ENCODE measurements at regions of chr14 and their contacts with region 1.

Region 1: DNA sequence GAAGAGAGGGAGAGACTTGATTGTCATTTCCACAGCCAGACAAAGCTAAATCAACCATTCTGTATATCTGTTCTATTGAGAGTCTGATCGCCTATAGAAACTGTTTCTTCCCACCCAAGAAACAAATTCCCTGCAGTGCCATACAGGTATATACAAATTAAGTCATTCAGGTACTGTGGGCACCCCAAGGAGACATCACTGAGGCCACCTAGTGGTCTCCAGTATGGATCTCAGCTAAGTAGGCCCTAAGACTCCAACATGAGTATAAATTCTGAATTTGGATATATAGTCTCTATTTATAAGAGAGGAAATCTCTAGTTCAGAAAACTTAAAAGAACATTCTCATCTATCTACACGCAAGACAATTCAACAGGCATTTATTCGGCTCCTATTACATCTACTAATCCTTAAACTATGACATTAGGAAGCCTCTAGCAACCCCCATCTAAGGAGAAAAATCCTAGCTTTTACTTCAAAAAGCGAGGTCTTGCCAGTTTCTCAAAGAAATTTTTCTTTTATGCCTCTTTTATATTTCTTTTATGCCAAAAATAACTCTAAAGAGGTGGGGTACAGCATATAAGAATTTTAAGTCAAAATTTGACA is 62.6 kb downstream of the DCAF5 start:
- DNase-seq: peak; percentile 7 to 28 (median 21)
- H3K4me3 ChIP-seq: no peak overlapping the region
- H3K4me3 Mint-ChIP-seq: no peak overlapping the region
- H3K27ac ChIP-seq: no peak overlapping the region
- H3K27ac Mint-ChIP-seq: no peak overlapping the region
- H3K4me1 ChIP-seq: no peaks in the 10 kb centered on the region
- H3K4me1 Mint-ChIP-seq: peaks cover 5% of the 10 kb centered on the region
- H3K27me3 ChIP-seq: no peaks in the 10 kb centered on the region
- H3K27me3 Mint-ChIP-seq: peaks cover 0 to 1% (median 0%) of the 10 kb centered on the region in 3 donors
- CTCF ChIP-seq: peak; percentile 77

Region 2: GRCh38 chr14:68979021-68979782 is 111.1 kb before region 1 on chr14 and contains the start of gene ACTN1:
- intact Hi-C with region 1: loop called in 1 of 2 experiments (anchors 5 kb)
- DNase-seq: peak; percentile 89 to 93 (median 91)
- H3K4me3 ChIP-seq: peak within 1 kb of the TSS; percentile 72 to 96 (median 93)
- H3K4me3 Mint-ChIP-seq: peak within 1 kb of the TSS; percentile 93 to 96
- H3K27ac ChIP-seq: peak within 1 kb of the TSS; percentile 66 to 85
- H3K27ac Mint-ChIP-seq: peak within 1 kb of the TSS; percentile 60 to 92 (median 84)
- H3K4me1 ChIP-seq: peaks cover 22 to 34% of the 10 kb centered on the region in 2 donors
- H3K4me1 Mint-ChIP-seq: peaks cover 37% of the 10 kb centered on the region
- H3K27me3 ChIP-seq: no peaks in the 10 kb centered on the region
- H3K27me3 Mint-ChIP-seq: peaks cover 0 to 10% (median 7%) of the 10 kb centered on the region in 3 donors
- CTCF ChIP-seq: no peak
- polyA plus RNA-seq, gene ACTN1: 41.4 to 75.0 (median 69.4) TPM

Region 3: DNA sequence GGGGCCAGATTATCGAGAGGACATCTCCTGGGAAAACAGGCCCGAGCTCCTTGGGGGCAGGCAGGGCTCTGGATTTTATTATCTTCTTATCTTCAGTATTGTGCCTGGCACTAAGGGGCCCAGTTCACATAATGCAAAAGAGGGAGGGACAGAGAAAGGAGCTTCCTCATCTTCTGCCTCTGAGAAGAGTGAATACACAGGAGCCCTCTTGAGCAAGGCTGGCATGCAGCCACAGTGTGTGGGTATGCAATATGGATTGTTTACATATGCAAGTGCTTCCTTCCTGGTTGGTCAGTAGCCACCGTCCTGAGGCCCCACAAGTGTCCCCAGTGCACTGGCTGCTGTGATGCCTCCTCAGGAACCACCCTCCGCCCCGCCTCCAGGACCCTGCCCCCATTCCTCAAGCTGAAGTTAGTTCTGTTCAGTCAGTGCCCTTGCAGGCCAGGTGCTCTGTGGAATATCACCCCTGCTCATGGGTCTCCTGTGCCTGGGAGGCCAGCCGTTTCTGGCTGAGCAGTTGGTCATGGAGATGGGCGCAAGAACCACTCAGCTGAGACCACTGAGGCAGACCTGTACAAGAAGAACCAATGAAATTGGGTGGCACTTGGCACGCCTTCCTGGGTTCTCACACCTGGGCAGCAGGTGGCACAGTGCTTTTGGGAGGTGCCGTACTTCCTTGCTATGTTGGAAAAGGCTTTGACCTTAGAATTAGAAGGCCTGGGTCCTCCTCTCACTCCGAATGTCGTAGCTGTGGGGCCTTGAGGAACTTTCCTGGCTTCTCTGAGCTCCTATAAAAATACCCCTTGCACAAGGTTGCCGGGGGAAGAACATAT is 76.1 kb before region 1 on chr14:
- intact Hi-C with region 1: loop called in 1 of 2 experiments (anchors 10 kb)
- DNase-seq: peak; percentile 91 to 97 (median 93)
- H3K4me3 ChIP-seq: peak overlapping the region in 1 of 3 experiments; percentile 53
- H3K4me3 Mint-ChIP-seq: peak overlapping the region; percentile 34 to 60
- H3K27ac ChIP-seq: peak overlapping the region; percentile 72 to 82
- H3K27ac Mint-ChIP-seq: peak overlapping the region; percentile 87 to 95 (median 94)
- H3K4me1 ChIP-seq: peaks cover 39 to 49% of the 10 kb centered on the region in 2 donors
- H3K4me1 Mint-ChIP-seq: peaks cover 46% of the 10 kb centered on the region
- H3K27me3 ChIP-seq: no peaks in the 10 kb centered on the region
- H3K27me3 Mint-ChIP-seq: peaks cover 0 to 1% (median 0%) of the 10 kb centered on the region in 3 donors
- CTCF ChIP-seq: no peak